HepG2 (cell line): ENCODE measurements at regions of chr19 and their contacts with region 1.

Region 1: DNA sequence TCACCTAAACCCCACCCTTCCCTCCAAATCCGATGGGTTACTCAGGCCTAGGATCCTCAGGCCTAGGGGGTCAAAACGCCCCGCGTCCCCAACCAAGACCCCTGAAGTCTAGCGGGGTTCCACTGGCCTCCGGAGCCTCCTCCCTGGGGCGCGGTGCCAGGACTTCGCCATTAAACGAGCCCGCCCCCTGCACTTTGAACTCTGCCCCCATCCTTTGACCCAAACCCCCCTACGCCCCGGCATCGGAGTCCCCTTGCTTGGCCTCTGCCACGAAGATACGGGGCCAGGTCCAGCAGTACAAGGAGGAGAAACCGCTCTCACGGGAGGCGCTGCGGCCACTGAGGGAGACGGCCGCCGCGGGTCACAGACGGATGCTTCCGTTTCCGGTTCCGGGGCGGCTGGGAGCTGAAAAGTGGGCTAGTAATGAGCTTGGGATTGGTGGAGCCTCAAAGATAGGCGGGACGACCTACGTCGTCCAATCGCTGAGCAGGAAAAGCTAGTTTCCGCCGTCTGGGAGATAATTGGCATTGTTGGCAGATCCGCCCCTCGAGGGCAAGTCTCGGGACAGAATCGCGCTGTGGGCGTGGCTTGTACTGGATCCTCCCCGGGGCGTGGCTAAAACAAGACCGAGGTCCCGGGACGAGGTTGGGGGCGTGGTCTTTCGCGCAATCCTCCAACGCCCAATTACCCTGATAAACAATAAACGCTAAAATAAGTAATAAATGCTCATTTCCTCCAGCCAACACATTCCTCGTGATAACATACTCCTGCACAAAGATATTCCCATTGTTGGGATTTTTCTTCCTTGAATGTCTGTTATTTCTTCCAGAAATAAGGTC is 5.7 kb upstream of the ZNF77 start:
- DNase-seq: peak; percentile 98
- ATAC-seq: peak; percentile 95
- H3K4me3 ChIP-seq: peak overlapping the region; percentile 81 to 97 (median 90)
- H3K27ac ChIP-seq: peak overlapping the region; percentile 89
- H3K4me1 ChIP-seq: peaks cover 42% of the 10 kb centered on the region
- H3K27me3 ChIP-seq: no peaks in the 10 kb centered on the region; a peak in 1 of 5 replicates
- CTCF ChIP-seq: peak; percentile 42; the same call in 1 of the 2 replicates
- EP300 ChIP-seq: no peak
- POLR2A ChIP-seq: peak; percentile 91
- RAD21 ChIP-seq: peak; percentile 39

Region 2: GRCh38 chr19:2840794-2841790 is 109.4 kb before region 1 on chr19 and contains the start of gene ZNF555:
- CTCF ChIA-PET with region 1: no interaction called
- POLR2A ChIA-PET with region 1: interaction called, 10 read pairs
- in situ Hi-C with region 1: no loop called
- intact Hi-C with region 1: no loop called
- DNase-seq: peak; percentile 98
- ATAC-seq: peak; percentile 97
- H3K4me3 ChIP-seq: peak within 1 kb of the TSS; percentile 83 to 93 (median 92)
- H3K27ac ChIP-seq: peak within 1 kb of the TSS; percentile 93
- H3K4me1 ChIP-seq: peaks cover 69% of the 10 kb centered on the region
- H3K27me3 ChIP-seq: no peaks in the 10 kb centered on the region
- CTCF ChIP-seq: peak; percentile 66
- EP300 ChIP-seq: no peak
- POLR2A ChIP-seq: peak; percentile 45 to 62; a peak in 3 of 4 replicates
- RAD21 ChIP-seq: peak; percentile 61
- total RNA-seq, gene ZNF555: 8.0 and 12.4 TPM in 2 replicates

Region 3: GRCh38 chr19:2856457-2857050 is 94.0 kb before region 1 on chr19:
- CTCF ChIA-PET with region 1: no interaction called
- POLR2A ChIA-PET with region 1: no interaction called
- in situ Hi-C with region 1: no loop called
- intact Hi-C with region 1: no loop called
- DNase-seq: no peak
- ATAC-seq: no peak
- H3K4me3 ChIP-seq: no peak overlapping the region
- H3K27ac ChIP-seq: no peak overlapping the region
- H3K4me1 ChIP-seq: peaks cover 18% of the 10 kb centered on the region
- H3K27me3 ChIP-seq: no peaks in the 10 kb centered on the region
- CTCF ChIP-seq: no peak
- EP300 ChIP-seq: no peak
- POLR2A ChIP-seq: no peak
- RAD21 ChIP-seq: no peak

Region 4: DNA sequence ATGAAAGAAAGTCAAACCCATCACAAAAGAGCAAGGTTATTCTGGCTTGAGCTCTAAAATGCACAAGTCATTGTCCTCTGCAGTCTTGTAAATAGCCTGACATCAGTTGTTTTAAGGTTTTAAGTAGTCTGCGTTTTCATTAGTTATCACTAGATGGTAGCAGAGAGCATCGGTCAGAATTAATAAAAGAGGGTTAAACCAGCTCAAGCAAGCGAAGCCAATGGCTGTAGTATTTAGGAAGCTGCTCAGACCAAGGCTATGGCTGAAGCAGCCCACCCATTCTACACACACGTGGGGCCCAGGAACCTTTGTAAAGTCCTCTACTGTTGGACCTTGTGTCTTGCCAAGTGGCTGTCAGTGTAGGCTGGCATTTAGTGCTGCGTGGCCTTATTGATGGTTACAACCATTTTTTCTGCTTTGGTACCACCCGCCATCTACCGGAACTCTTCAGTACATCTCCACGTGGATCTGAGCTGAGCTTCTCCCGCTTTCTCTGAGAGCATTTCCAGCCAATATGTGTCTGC is 63.1 kb before region 1 on chr19:
- CTCF ChIA-PET with region 1: interaction called, 7 read pairs
- POLR2A ChIA-PET with region 1: interaction called, 10 read pairs
- in situ Hi-C with region 1: no loop called
- intact Hi-C with region 1: no loop called
- DNase-seq: peak; percentile 76
- ATAC-seq: peak; percentile 69
- H3K4me3 ChIP-seq: no peak overlapping the region; a peak in 1 of 6 replicates
- H3K27ac ChIP-seq: no peak overlapping the region
- H3K4me1 ChIP-seq: peaks cover 14% of the 10 kb centered on the region
- H3K27me3 ChIP-seq: no peaks in the 10 kb centered on the region
- CTCF ChIP-seq: peak; percentile 72
- EP300 ChIP-seq: no peak
- POLR2A ChIP-seq: no peak
- RAD21 ChIP-seq: peak; percentile 52

Region 5: DNA sequence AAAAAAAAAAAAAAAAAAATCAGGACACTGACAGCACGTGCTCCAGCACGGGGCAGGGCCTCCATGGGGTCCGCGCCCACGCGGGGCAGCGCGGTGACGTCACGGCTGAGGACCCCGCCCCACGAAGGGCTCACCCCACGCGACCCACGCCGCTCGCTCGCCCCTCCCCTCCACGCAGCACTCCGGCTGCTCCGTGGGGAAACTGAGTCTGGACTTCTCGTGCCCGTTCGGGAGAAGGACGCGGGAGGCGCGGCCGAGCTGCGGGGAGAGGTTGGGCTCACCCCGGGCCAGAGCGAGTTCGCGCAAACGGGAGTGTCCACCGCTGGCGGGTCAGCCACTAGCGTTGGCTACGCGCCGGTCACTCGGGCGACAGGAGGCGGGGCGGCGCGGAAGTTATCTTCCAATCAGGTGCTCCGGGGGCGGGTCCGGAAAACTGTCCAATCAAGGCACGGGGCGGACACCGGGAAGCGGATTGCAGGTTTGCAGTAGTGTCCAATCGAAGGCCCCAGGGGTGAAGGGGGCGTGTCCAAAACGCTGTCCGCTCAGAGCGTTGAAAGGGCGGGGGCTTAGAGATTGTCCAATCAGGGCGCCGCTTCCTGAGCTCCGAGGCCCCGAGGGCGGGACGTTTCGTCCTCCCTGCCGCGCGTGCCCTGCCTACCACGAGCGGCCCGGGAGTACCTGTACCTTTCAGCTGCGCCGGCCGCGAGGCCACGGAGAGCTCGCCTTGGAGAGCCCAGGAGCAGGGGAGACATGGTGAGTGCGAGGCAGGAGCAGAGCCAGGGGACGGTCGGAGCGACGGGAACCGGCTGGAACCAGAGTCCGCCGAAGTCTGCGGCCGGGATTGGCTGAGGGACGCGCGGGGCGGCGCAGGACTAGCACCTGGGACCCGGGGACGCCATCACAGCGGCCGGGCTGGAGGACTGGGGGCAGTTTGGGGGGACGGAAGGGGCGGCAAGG is 49.9 kb before region 1 on chr19 and contains the start of gene ZNF57:
- CTCF ChIA-PET with region 1: no interaction called
- POLR2A ChIA-PET with region 1: interaction called, 26 read pairs
- in situ Hi-C with region 1: no loop called
- intact Hi-C with region 1: no loop called
- DNase-seq: peak; percentile 98
- ATAC-seq: peak; percentile 87
- H3K4me3 ChIP-seq: peak within 1 kb of the TSS; percentile 86 to 98 (median 91)
- H3K27ac ChIP-seq: peak within 1 kb of the TSS; percentile 88
- H3K4me1 ChIP-seq: peaks cover 49% of the 10 kb centered on the region
- H3K27me3 ChIP-seq: no peaks in the 10 kb centered on the region
- CTCF ChIP-seq: 0 out of 2 replicates have a peak, but pooled peaks have one; percentile 4
- EP300 ChIP-seq: no peak
- POLR2A ChIP-seq: peak; percentile 67 to 86
- RAD21 ChIP-seq: peak; percentile 66
- total RNA-seq, gene ZNF57: 17.5 and 25.8 TPM in 2 replicates

Region 6: DNA sequence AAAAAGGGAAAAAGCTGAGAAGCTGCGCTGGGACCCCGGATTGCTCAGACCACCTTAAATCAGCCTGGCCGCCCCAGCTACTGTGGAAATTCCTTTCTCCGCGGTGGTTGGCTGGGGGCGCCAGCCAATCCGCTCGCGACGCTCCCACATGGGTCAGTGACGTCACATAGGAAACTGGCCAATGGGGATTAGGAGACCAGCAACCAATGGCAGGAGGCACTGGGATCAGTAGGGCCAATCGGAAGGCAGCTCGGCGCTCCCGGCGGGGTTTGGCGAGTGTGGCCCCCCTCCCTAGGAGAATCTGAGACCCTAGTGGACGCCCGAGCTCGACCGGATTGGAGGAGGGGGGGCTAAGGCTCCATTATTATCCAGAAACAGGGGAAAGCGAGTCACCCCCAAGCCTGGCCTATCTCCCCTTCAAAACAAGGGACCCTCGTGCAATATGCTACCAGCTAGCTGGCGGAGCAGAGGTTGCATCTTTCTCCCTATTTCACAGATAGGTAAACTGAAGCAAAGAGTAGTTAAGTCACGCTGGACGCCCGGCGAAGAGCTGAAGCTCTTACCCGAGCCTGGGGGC is 85.1 kb after region 1 on chr19:
- CTCF ChIA-PET with region 1: interaction called, 3 read pairs
- POLR2A ChIA-PET with region 1: interaction called, 23 read pairs
- in situ Hi-C with region 1: no loop called
- intact Hi-C with region 1: no loop called
- DNase-seq: peak; percentile 98
- ATAC-seq: peak; percentile 84
- H3K4me3 ChIP-seq: peak overlapping the region; percentile 73 to 82 (median 78)
- H3K27ac ChIP-seq: peak overlapping the region; percentile 85
- H3K4me1 ChIP-seq: peaks cover 67% of the 10 kb centered on the region
- H3K27me3 ChIP-seq: peaks cover 3 to 16% of the 10 kb centered on the region in 2 experiments; a peak in 2 of 5 replicates
- CTCF ChIP-seq: no peak
- EP300 ChIP-seq: peak in 1 of 2 experiments; percentile 17; a peak in 1 of 4 replicates
- POLR2A ChIP-seq: peak in 1 of 2 experiments; percentile 58; a peak in 3 of 4 replicates
- RAD21 ChIP-seq: no peak

Region 7: DNA sequence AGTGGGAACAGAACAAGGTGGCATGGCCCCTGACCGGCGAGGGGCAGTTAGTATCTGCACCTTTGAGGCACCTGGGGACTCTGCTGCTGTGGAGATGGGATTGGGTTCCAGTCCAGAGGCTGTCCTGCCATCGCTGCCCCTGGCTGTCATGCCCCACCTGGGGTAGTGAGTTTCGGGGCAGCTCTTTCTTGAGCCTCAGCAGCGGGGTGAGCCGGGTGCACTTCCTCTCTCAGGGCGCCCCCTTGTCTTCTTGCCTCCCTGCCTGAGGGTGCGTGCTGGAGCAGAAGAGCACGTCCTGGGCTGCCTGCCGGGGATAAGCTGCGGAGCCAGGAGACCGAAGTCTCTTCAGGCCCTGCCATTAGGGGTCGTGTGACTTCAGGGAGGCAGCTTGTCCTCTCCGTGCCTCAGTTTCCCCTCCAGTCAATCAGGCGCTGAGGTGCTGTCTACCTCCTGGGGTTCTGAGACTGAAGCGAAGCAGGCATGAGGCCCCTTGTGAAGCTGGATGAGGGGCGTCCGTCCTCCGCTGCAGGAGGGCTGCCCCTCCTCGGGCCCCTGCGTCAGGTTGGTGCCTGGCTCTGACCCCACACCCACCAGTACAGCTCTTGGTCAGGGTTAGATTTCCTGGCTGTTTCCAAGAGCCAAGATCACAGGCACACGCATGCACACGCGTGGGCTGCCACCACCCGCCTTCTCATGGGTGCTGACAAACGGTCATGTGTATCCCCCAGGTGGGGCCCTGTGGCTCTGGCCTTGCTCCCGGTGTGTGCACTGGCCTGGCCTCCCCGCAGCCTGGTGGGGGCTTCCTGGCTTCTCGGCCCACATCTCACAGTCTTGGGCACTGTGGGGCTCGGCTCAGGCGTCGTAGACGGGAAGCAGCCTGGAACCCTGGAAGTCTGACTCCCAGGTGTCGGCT is 152.0 kb after region 1 on chr19:
- CTCF ChIA-PET with region 1: interaction called, 10 read pairs
- POLR2A ChIA-PET with region 1: interaction called, 9 read pairs
- in situ Hi-C with region 1: loop called (anchors 5 kb)
- intact Hi-C with region 1: no loop called
- DNase-seq: no peak
- ATAC-seq: no peak
- H3K4me3 ChIP-seq: no peak overlapping the region
- H3K27ac ChIP-seq: no peak overlapping the region
- H3K4me1 ChIP-seq: peaks cover 54% of the 10 kb centered on the region
- H3K27me3 ChIP-seq: no peaks in the 10 kb centered on the region
- CTCF ChIP-seq: no peak
- EP300 ChIP-seq: no peak
- POLR2A ChIP-seq: no peak
- RAD21 ChIP-seq: no peak; the same call in 1 of the 2 replicates

Region 8: GRCh38 chr19:3163230-3163886 is 212.9 kb after region 1 on chr19:
- CTCF ChIA-PET with region 1: interaction called, 3 read pairs
- POLR2A ChIA-PET with region 1: no interaction called
- in situ Hi-C with region 1: loop called (anchors 10 kb)
- intact Hi-C with region 1: no loop called
- DNase-seq: peak; percentile 46
- ATAC-seq: peak; percentile 95
- H3K4me3 ChIP-seq: peak overlapping the region in 1 of 3 experiments; percentile 39; a peak in 1 of 6 replicates
- H3K27ac ChIP-seq: no peak overlapping the region
- H3K4me1 ChIP-seq: no peaks in the 10 kb centered on the region
- H3K27me3 ChIP-seq: no peaks in the 10 kb centered on the region
- CTCF ChIP-seq: peak; percentile 94
- EP300 ChIP-seq: no peak
- POLR2A ChIP-seq: no peak
- RAD21 ChIP-seq: peak; percentile 84